HAP-1 (cell line): ENCODE measurements at regions of chr9 and their contacts with region 1.

Region 1: DNA sequence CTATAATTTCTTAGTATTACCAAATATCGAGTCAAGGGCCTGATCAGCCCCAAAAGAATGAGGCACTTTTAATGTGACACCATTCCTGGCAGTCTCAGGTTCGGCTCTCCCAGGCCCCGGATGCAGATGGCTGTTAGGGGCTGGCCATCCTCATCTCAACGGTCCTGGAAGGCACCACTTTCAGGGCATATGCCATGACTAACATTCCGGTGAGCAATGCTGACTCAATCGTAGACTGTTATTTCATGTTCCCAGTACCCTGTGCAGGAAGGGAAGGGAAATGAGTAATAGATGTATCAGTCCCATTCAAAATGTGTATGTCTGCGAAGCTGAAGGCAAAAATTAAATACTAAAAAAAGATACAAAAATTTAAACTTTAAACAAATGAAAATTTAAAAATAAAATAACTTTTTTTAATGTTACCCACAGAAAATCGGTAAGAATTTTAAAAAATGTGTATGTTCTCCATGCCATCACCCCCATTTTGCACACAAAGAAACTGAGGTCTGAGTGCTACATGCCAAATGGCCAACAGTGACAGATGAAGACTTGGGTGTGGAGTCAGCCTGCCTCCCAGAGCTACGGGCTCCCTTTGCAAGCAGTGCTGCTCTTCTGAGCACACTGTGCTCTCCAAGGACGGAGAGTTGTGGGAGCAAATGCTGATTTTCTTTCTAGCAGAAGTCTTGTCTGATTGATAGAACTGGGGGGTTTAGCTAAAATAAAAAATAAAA is 79.0 kb downstream of the GLDC start:
- DNase-seq: no peak
- H3K4me3 ChIP-seq: no peak overlapping the region
- H3K4me1 ChIP-seq: no peaks in the 10 kb centered on the region
- H3K27me3 ChIP-seq: no peaks in the 10 kb centered on the region

Region 2: GRCh38 chr9:6367128-6367890 is 199.3 kb before region 1 on chr9:
- in situ Hi-C with region 1: loop called (anchors 10 kb)
- DNase-seq: no peak
- H3K4me3 ChIP-seq: no peak overlapping the region
- H3K4me1 ChIP-seq: no peaks in the 10 kb centered on the region
- H3K27me3 ChIP-seq: peaks cover 2% of the 10 kb centered on the region; the same call in 1 of the 2 replicates

Region 3: GRCh38 chr9:6630502-6631206 is 64.1 kb after region 1 on chr9:
- in situ Hi-C with region 1: no loop called
- DNase-seq: no peak
- H3K4me3 ChIP-seq: no peak overlapping the region
- H3K4me1 ChIP-seq: no peaks in the 10 kb centered on the region
- H3K27me3 ChIP-seq: no peaks in the 10 kb centered on the region; the same call in 1 of the 2 replicates